Ovary (tissue), 10 donors: ENCODE measurements at regions of chr1 and their contacts with region 1.

Region 1: GRCh38 chr1:23743287-23744052 is at the start of gene ELOA:
- DNase-seq: peak; percentile 59 to 83 (median 67)
- H3K4me3 ChIP-seq: peak within 1 kb of the TSS; percentile 99
- H3K27ac ChIP-seq: peak within 1 kb of the TSS; percentile 49 to 87
- H3K4me1 ChIP-seq: peaks cover 11% of the 10 kb centered on the region
- H3K27me3 ChIP-seq: no peaks in the 10 kb centered on the region
- CTCF ChIP-seq: peak in 1 of 3 donors; percentile 23
- EP300 ChIP-seq: no peak
- POLR2A ChIP-seq: peak; percentile 32
- total RNA-seq, gene ELOA: 17.8 to 38.0 (median 27.3) TPM

Region 2: DNA sequence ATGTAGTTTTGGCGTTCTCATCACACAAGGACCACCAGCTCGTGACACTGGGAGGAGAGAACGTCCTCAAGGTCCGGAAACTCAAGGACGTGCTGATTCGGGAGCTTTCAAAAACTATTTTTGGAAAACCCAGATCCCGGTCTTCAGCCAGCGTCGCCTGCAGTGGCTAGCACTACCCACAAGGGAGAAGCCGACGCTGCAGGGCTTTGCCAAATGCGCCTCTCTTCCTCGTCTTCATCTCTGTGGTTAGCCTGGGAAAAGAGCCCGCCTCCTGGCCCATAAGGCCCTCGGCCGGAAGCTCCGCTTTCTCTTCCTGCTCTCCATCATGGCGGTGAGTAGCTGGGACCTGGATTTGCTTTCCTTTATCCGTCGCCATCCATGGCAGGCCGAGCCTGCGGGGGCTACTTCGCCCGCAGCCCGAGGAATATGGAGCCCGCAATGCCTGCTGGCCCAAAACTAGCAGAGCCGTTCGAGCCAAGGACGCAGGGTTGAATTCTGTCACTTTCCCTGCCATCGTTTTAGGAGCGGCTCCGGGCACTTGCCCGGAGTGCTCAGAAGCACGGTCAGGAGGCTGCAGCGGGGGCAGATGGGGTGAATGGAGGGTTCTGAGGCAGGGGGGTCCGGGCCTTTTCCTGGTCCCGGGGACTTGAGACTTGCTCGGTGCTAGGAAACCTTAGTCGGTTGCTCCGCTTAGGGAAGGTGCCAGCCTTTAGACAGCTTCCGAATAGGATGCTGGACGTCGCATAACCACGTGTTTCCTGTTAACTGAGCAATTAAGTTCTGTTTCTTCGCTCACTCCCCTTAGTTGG is 51.8 kb before region 1 on chr1 and contains the start of gene RPL11:
- intact Hi-C with region 1: loop called in 2 of 4 experiments (anchors 5 to 10 kb)
- DNase-seq: peak; percentile 91 to 94 (median 93)
- H3K4me3 ChIP-seq: peak within 1 kb of the TSS; percentile 54
- H3K27ac ChIP-seq: peak within 1 kb of the TSS; percentile 69 to 89
- H3K4me1 ChIP-seq: peaks cover 9% of the 10 kb centered on the region
- H3K27me3 ChIP-seq: no peaks in the 10 kb centered on the region
- CTCF ChIP-seq: peak; percentile 78 to 87 (median 86)
- EP300 ChIP-seq: no peak
- POLR2A ChIP-seq: peak; percentile 80
- total RNA-seq, gene RPL11: 1,656 to 2,751 (median 1,969) TPM

Region 3: DNA sequence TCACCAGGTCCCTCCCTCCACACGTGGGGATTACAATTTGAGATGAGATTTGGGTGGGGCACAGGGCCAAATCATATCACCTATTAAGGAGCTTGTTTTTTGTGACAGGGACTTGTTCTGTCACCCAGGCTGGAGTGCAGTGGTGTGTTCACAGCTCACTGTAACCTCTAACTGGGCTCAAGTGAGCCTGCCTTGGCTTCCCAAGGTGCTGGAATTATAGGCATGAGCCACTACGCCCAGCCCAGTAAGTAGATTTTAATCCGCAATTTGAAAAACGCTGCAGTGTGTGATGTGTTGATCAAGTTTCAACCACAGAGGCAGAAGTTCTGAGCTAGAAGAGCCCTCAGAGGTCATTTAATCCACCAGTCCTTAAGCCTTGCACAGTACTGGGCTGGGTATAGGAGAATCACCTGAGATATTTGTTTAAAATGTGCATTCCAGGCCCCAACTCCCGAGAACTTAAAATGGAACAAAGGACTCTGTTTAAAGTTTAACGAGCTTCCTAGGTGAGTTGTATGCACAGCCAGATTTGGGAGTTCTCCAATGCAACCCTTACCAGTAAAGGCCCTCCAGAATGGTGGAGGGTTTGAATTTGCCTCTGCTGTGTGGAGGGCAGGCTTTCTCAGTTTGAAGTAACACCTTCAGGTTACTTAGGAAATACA is 38.5 kb before region 1 on chr1:
- intact Hi-C with region 1: no loop called
- DNase-seq: no peak
- H3K4me3 ChIP-seq: no peak overlapping the region
- H3K27ac ChIP-seq: no peak overlapping the region
- H3K4me1 ChIP-seq: no peaks in the 10 kb centered on the region
- H3K27me3 ChIP-seq: no peaks in the 10 kb centered on the region
- CTCF ChIP-seq: no peak
- EP300 ChIP-seq: no peak
- POLR2A ChIP-seq: no peak